Activated naive CD4-positive, alpha-beta T cell treated with anti-CD3 and anti-CD28 coated beads for 36 hours (primary cell): ENCODE measurements at regions of chr9 and their contacts with region 1.

Region 1: DNA sequence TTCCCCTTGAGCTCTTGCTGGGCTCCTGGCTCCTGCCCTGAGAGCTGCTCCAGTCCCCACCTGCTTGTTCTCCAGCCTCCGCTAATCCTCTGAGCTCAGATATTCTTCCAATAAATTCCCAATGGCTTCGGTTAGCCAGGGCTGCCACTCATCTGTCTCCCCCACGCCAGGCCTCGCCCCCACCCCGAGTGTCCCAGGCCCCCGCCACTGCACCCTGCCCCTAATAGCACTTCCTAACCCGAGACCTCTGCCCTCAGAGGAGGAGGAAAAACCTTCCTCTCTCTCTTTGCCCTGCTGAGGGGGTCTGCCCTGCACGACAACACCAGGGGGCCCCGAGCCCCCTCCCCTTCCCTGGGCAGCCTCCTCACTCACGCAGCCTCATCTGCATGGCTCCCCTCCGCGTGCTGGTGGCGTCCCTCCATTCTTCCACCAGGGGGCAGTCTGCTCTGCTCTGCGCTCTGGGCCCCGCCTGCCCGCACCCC is 5.4 kb upstream of the LCN15 start:
- DNase-seq: peak; percentile 70
- H3K4me3 Mint-ChIP-seq: no peak overlapping the region
- H3K27ac Mint-ChIP-seq: no peak overlapping the region
- H3K4me1 Mint-ChIP-seq: peaks cover 18% of the 10 kb centered on the region
- H3K27me3 Mint-ChIP-seq: peaks cover 19% of the 10 kb centered on the region

Region 2: GRCh38 chr9:136750526-136750925 is 19.2 kb before region 1 on chr9:
- CTCF ChIA-PET with region 1: interaction called, 5 read pairs
- intact Hi-C with region 1: loop called (anchors 1 kb)
- DNase-seq: no peak
- H3K4me3 Mint-ChIP-seq: no peak overlapping the region
- H3K27ac Mint-ChIP-seq: no peak overlapping the region
- H3K4me1 Mint-ChIP-seq: peaks cover 10% of the 10 kb centered on the region
- H3K27me3 Mint-ChIP-seq: peaks cover 9% of the 10 kb centered on the region

Region 3: GRCh38 chr9:136784249-136784996 is 14.7 kb after region 1 on chr9:
- CTCF ChIA-PET with region 1: interaction called, 18 read pairs
- intact Hi-C with region 1: loop called (anchors 1 kb)
- DNase-seq: no peak
- H3K4me3 Mint-ChIP-seq: no peak overlapping the region
- H3K27ac Mint-ChIP-seq: peak overlapping the region; percentile 15
- H3K4me1 Mint-ChIP-seq: peaks cover 11% of the 10 kb centered on the region
- H3K27me3 Mint-ChIP-seq: no peaks in the 10 kb centered on the region

Region 4: GRCh38 chr9:136895768-136896426 is 126.1 kb after region 1 on chr9:
- CTCF ChIA-PET with region 1: no interaction called
- intact Hi-C with region 1: no loop called
- DNase-seq: no peak
- H3K4me3 Mint-ChIP-seq: no peak overlapping the region
- H3K27ac Mint-ChIP-seq: no peak overlapping the region
- H3K4me1 Mint-ChIP-seq: peaks cover 24% of the 10 kb centered on the region
- H3K27me3 Mint-ChIP-seq: no peaks in the 10 kb centered on the region